ENCODE measurements at regions of chrX and their contacts with region 1.

Region 1: GRCh38 chrX:112979879-112980278 is 139.2 kb upstream of the AMOT start:
- DNase-seq: no peak
- H3K4me3 ChIP-seq: no peak overlapping the region
- H3K27ac ChIP-seq: no peak overlapping the region
- H3K4me1 ChIP-seq: no peaks in the 10 kb centered on the region
- H3K27me3 ChIP-seq: no peaks in the 10 kb centered on the region
- CTCF ChIP-seq: no peak

Region 2: GRCh38 chrX:112889400-112889799 is 90.5 kb before region 1 on chrX:
- CTCF ChIA-PET with region 1: no interaction called
- POLR2A ChIA-PET with region 1: no interaction called
- intact Hi-C with region 1: no loop called
- DNase-seq: no peak
- H3K4me3 ChIP-seq: no peak overlapping the region
- H3K27ac ChIP-seq: no peak overlapping the region
- H3K4me1 ChIP-seq: no peaks in the 10 kb centered on the region
- H3K27me3 ChIP-seq: no peaks in the 10 kb centered on the region
- CTCF ChIP-seq: no peak

Region 3: DNA sequence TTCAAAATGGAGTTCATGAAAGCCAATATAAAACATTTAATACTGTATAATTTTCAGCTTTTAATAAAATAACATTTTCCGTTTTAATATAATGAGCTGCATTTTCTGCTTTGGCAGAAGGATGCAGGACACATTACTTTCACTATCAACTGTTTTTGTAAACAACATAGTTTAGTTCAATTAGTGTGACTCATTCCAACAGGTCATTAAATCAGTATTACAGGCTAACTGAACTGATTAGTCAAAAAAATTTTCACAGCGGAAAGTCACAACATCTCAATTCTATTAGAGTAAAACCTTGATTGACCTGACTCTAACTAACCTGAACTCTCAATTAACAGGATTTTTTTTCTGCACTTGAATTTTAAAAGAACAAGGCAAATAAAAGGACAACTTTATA is 11.9 kb after region 1 on chrX:
- CTCF ChIA-PET with region 1: interaction called, 11 read pairs
- POLR2A ChIA-PET with region 1: no interaction called
- intact Hi-C with region 1: no loop called
- DNase-seq: no peak
- H3K4me3 ChIP-seq: no peak overlapping the region
- H3K27ac ChIP-seq: no peak overlapping the region
- H3K4me1 ChIP-seq: no peaks in the 10 kb centered on the region
- H3K27me3 ChIP-seq: no peaks in the 10 kb centered on the region
- CTCF ChIP-seq: no peak

Measured in PC-9 (cell line).